ENCODE measurements at regions of chr4 and their contacts with region 1.

Region 1: DNA sequence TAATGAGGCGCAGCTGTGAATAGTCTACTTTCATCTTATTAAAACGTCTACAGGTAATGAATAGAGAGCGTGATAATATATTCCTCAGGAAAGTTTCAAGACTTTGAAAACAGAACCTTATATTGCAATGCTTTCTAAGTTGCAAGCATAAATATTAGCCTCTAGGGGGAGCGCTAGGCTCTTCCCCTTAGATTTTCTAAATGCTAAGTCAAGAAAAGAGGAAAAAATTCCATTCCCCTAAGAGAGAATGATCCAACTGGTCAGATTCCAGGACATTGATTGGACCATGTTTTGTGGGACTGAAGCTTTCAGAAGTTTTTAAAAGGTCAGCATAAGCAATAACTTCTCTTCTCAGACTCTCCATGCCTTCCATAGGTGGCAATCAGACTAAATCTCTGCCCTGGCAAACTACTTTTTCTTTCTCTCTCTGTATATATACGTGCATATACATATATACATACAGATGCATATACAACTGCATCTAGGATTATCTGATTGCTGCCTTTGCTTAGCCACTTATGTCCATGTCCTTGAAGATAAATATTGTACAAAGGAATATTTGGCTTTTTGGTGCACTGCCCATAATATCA is 492.9 kb downstream of the INPP4B start:
- DNase-seq: no peak
- ATAC-seq: peak in 3 of 4 donors; percentile 47 to 77 (median 60)
- H3K4me3 ChIP-seq: peak overlapping the region; percentile 37
- H3K27ac ChIP-seq: peak overlapping the region; percentile 23
- H3K4me1 ChIP-seq: peaks cover 34% of the 10 kb centered on the region
- H3K27me3 ChIP-seq: no peaks in the 10 kb centered on the region
- CTCF ChIP-seq: peak; percentile 92

Region 2: DNA sequence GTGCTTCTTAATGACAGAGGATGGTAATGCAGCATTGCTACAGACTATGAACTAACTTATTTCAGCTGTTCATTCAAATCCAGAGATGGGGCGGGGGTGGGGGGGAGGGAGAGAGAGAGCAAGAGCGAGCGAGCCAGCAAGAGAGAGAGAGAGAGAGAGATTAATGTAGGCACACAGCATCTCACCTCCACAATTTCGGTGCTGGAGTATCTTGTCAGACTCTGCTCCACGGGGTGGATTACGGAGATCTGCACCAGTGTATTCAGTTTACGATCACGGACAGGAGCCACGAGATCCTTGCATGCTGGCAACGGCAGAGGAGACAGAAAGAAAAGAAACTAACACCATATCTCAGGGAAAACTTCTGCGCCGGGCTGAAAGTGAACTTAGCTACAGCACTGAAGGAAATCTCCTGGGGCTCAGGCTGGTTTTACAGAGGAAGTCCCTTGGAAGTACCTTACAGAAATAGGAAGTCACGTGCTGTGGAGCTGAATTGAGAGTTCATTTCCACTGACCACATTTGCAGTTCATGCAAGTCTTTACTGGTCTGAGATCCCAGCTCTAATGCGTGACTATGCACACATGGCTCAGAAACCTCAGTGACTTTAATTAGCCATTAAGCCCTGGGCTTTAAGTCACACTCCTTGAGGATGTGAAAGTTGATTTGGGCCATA is 51.9 kb after region 1 on chr4:
- intact Hi-C with region 1: loop called in 1 of 2 experiments (anchors 5 kb)
- DNase-seq: peak; percentile 15 to 47
- ATAC-seq: peak; percentile 61 to 65 (median 64)
- H3K4me3 ChIP-seq: peak overlapping the region; percentile 65
- H3K27ac ChIP-seq: peak overlapping the region; percentile 80
- H3K4me1 ChIP-seq: peaks cover 49% of the 10 kb centered on the region
- H3K27me3 ChIP-seq: no peaks in the 10 kb centered on the region
- CTCF ChIP-seq: no peak

Region 3: GRCh38 chr4:142500974-142501373 is 147.7 kb after region 1 on chr4:
- intact Hi-C with region 1: no loop called
- DNase-seq: no peak
- ATAC-seq: peak; percentile 82 to 95 (median 85)
- H3K4me3 ChIP-seq: no peak overlapping the region
- H3K27ac ChIP-seq: no peak overlapping the region
- H3K4me1 ChIP-seq: no peaks in the 10 kb centered on the region
- H3K27me3 ChIP-seq: no peaks in the 10 kb centered on the region
- CTCF ChIP-seq: no peak

Region 4: DNA sequence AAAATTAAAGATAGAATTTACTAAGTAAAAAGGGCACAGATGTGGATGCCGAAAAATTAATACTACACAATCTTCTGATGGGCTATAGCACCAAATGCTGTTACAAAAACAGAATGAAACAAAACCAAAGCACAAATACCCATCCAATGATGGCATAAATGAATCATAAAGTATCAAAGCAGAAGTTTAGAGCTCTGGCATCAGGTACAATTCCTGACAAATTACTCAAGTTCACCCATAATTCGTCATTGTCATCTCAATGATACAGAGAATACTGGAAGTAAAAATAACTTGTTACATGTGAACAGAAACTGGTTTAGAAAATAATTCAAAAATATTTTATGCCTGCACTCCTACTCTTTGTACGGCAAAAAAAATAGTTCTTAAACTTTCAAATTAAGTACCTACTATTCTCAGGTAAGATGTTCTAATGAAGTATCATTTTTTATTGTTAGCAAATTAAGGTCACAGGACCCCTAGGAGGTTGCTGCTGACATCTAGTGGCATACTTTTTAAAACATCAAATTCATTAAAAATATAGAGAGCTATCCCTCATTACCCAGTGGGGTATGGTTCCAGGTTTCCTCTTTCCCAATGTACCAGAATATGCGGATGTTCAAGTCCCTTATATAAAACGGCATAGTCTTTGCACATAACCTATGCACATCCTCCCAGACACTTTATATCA is 366.8 kb after region 1 on chr4:
- intact Hi-C with region 1: loop called in 1 of 2 experiments (anchors 10 kb)
- DNase-seq: no peak
- ATAC-seq: no peak
- H3K4me3 ChIP-seq: no peak overlapping the region
- H3K27ac ChIP-seq: no peak overlapping the region
- H3K4me1 ChIP-seq: no peaks in the 10 kb centered on the region
- H3K27me3 ChIP-seq: no peaks in the 10 kb centered on the region
- CTCF ChIP-seq: peak; percentile 42

Region 5: DNA sequence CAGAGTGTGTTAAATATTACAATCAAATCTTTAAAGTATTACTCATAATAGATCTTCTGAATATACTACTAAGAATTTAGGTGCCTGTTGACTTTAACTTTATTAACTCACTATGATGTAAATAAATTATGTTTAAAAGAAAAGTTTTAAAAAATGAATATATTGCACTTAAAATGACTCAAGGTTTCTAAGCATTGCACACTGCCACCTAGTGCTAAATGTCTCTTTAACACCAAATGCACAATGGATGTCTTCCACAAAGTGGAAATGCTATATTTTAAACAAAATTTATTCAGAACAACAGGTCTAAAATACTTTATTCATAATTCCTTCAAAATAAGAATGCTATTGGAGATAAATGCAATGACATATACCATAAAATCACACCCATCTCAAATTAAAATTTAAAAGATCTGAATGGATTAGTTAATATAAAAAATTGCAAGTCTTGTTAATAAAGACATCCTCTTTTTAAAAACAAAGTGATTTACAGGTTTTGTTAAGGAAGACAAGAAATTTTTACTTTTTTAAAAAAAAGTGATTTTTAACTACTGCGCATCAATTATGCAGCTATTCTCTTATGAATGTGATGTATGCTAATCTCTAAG is 487.4 kb after region 1 on chr4:
- intact Hi-C with region 1: loop called in 1 of 2 experiments (anchors 2 kb)
- DNase-seq: no peak
- ATAC-seq: peak in 2 of 4 donors; percentile 50 to 71
- H3K4me3 ChIP-seq: no peak overlapping the region
- H3K27ac ChIP-seq: no peak overlapping the region
- H3K4me1 ChIP-seq: peaks cover 4% of the 10 kb centered on the region
- H3K27me3 ChIP-seq: no peaks in the 10 kb centered on the region
- CTCF ChIP-seq: peak; percentile 68

Measured in psoas muscle (tissue), 8 donors.